Naive thymus-derived CD4-positive, alpha-beta T cell (primary cell): ENCODE measurements at regions of chr2 and their contacts with region 1.

Region 1: GRCh38 chr2:135876066-135876711 is at the start of gene MCM6:
- DNase-seq: peak; percentile 91 to 99 (median 97)
- ATAC-seq: peak; percentile 96
- H3K4me3 ChIP-seq: peak within 1 kb of the TSS; percentile 83
- H3K4me3 Mint-ChIP-seq: peak within 1 kb of the TSS; percentile 85 to 97 (median 93)
- H3K27ac ChIP-seq: peak within 1 kb of the TSS; percentile 84
- H3K27ac Mint-ChIP-seq: peak within 1 kb of the TSS; percentile 84 to 97 (median 95)
- H3K4me1 ChIP-seq: peaks cover 12 to 18% of the 10 kb centered on the region in 2 donors
- H3K4me1 Mint-ChIP-seq: peaks cover 23 to 44% (median 41%) of the 10 kb centered on the region in 7 donors
- H3K27me3 ChIP-seq: no peaks in the 10 kb centered on the region
- H3K27me3 Mint-ChIP-seq: peaks cover 0 to 5% (median 0%) of the 10 kb centered on the region in 5 donors
- total RNA-seq, gene MCM6: 12.1 to 105 (median 21.6) TPM

Region 2: GRCh38 chr2:135149251-135149650 is 726.9 kb before region 1 on chr2:
- CTCF ChIA-PET with region 1: no interaction called
- POLR2A ChIA-PET with region 1: no interaction called
- intact Hi-C with region 1: loop called in 1 of 2 experiments (anchors 10 kb)
- DNase-seq: no peak
- ATAC-seq: no peak
- H3K4me3 ChIP-seq: no peak overlapping the region
- H3K4me3 Mint-ChIP-seq: no peak overlapping the region
- H3K27ac ChIP-seq: no peak overlapping the region
- H3K27ac Mint-ChIP-seq: peak overlapping the region in 1 of 9 donors; percentile 55
- H3K4me1 ChIP-seq: no peaks in the 10 kb centered on the region
- H3K4me1 Mint-ChIP-seq: peaks cover 5 to 26% (median 21%) of the 10 kb centered on the region in 7 donors
- H3K27me3 ChIP-seq: no peaks in the 10 kb centered on the region
- H3K27me3 Mint-ChIP-seq: no peaks in the 10 kb centered on the region

Region 3: DNA sequence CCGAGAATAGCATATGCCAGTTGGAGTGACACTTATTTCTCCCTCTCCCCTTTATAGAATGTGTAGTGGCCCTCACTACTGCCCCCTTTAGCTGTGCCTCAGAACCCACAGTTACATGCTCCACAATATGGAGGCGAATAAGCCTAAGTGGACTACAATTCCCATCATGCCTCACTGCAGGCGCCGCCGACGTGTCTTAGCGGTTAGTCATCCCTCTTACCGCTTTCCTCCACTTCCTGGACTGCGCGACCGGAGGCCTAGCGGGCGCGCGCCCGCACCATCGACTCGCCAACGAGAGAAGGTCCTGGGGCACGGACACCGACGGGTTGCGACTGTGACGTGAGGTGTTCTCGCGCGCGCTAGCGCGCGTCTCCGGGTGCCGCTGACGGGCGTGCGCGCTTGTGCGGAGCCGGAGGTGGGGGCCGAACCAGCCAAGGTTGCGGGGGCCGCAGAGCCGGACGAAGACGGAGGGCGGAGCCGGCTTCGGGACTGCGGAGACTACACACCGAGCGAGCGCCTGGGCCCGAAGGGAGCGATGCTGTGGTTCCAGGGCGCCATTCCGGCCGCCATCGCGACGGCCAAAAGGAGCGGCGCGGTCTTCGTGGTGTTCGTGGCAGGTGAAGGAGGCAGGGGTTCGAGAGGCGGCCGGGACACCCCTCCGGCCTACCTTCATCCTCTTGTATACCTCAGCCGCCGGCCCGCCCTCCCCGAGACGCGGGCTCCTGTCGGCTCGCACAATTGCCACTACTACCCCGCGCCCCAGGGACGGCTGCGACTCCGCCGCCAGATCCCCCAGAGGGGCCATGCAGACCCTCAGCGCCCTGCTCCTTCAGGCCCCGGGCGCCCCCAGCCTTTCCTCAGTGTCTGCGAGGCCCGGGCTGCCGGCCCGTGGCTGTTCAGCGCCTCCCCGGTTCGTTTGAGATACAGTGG is 134.5 kb before region 1 on chr2 and contains the start of gene UBXN4:
- CTCF ChIA-PET with region 1: no interaction called
- POLR2A ChIA-PET with region 1: interaction called, 5 read pairs
- intact Hi-C with region 1: loop called (anchors 1 kb)
- DNase-seq: peak; percentile 73 to 93 (median 88)
- ATAC-seq: peak; percentile 95
- H3K4me3 ChIP-seq: peak within 1 kb of the TSS; percentile 88
- H3K4me3 Mint-ChIP-seq: peak within 1 kb of the TSS; percentile 92 to 98 (median 95)
- H3K27ac ChIP-seq: peak within 1 kb of the TSS; percentile 97
- H3K27ac Mint-ChIP-seq: peak within 1 kb of the TSS; percentile 89 to 99 (median 95)
- H3K4me1 ChIP-seq: peaks cover 20 to 22% of the 10 kb centered on the region in 2 donors
- H3K4me1 Mint-ChIP-seq: peaks cover 24 to 47% (median 43%) of the 10 kb centered on the region in 7 donors
- H3K27me3 ChIP-seq: no peaks in the 10 kb centered on the region
- H3K27me3 Mint-ChIP-seq: no peaks in the 10 kb centered on the region
- total RNA-seq, gene UBXN4: 115 to 158 (median 145) TPM

Region 4: DNA sequence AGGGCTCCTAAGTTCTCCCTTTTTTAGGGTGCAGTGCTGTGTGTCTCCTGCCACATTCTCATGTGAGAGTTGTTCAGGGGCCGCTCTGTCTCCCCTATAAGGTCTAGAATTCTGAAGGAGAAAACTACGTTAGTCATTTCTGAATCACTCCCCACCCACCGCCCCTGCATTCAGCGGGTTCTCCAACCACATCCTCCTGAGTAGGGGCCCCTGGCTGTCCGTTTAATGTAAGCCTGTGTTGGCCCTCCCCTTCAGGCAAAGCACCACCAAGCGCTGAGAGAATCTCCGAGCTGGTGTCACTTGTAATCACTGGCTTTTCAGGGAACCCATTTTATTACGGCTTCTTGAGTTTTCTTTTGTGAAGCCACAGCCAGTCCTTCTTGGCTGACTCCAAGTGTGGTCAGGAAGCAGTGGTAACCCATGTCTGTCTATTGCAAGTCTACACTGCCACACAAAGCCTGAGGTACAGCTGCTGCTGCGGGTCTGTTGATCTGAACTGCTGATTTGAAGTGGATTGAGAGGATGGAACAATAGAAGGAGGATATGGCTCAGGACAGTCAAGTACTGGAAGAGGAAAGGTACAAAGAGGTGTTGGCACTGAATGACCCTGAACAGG is 56.1 kb before region 1 on chr2:
- CTCF ChIA-PET with region 1: no interaction called
- POLR2A ChIA-PET with region 1: no interaction called
- intact Hi-C with region 1: loop called in 1 of 2 experiments (anchors 1 kb)
- DNase-seq: peak in 8 of 9 donors; percentile 17 to 84 (median 42)
- ATAC-seq: peak; percentile 79
- H3K4me3 ChIP-seq: peak overlapping the region; percentile 13
- H3K4me3 Mint-ChIP-seq: peak overlapping the region; percentile 20 to 79 (median 58)
- H3K27ac ChIP-seq: no peak overlapping the region
- H3K27ac Mint-ChIP-seq: peak overlapping the region in 7 of 9 donors; percentile 9 to 81 (median 47)
- H3K4me1 ChIP-seq: peaks cover 10 to 11% of the 10 kb centered on the region in 2 donors
- H3K4me1 Mint-ChIP-seq: peaks cover 7 to 43% (median 24%) of the 10 kb centered on the region in 7 donors
- H3K27me3 ChIP-seq: no peaks in the 10 kb centered on the region
- H3K27me3 Mint-ChIP-seq: no peaks in the 10 kb centered on the region

Region 5: GRCh38 chr2:135843671-135844070 is 32.5 kb before region 1 on chr2:
- CTCF ChIA-PET with region 1: no interaction called
- POLR2A ChIA-PET with region 1: no interaction called
- intact Hi-C with region 1: no loop called
- DNase-seq: no peak
- ATAC-seq: no peak
- H3K4me3 ChIP-seq: no peak overlapping the region
- H3K4me3 Mint-ChIP-seq: no peak overlapping the region
- H3K27ac ChIP-seq: no peak overlapping the region
- H3K27ac Mint-ChIP-seq: no peak overlapping the region
- H3K4me1 ChIP-seq: no peaks in the 10 kb centered on the region
- H3K4me1 Mint-ChIP-seq: peaks cover 2 to 32% (median 10%) of the 10 kb centered on the region in 7 donors
- H3K27me3 ChIP-seq: no peaks in the 10 kb centered on the region
- H3K27me3 Mint-ChIP-seq: no peaks in the 10 kb centered on the region

Region 6: GRCh38 chr2:135960656-135961551 is 84.7 kb after region 1 on chr2:
- CTCF ChIA-PET with region 1: no interaction called
- POLR2A ChIA-PET with region 1: no interaction called
- intact Hi-C with region 1: loop called in 1 of 2 experiments (anchors 5 kb)
- DNase-seq: peak in 6 of 9 donors; percentile 3 to 44 (median 26)
- ATAC-seq: peak; percentile 76
- H3K4me3 ChIP-seq: no peak overlapping the region
- H3K4me3 Mint-ChIP-seq: peak overlapping the region in 9 of 10 donors; percentile 3 to 79 (median 37)
- H3K27ac ChIP-seq: peak overlapping the region; percentile 40
- H3K27ac Mint-ChIP-seq: peak overlapping the region; percentile 51 to 93 (median 83)
- H3K4me1 ChIP-seq: peaks cover 18 to 26% of the 10 kb centered on the region in 2 donors
- H3K4me1 Mint-ChIP-seq: peaks cover 37 to 67% (median 60%) of the 10 kb centered on the region in 7 donors
- H3K27me3 ChIP-seq: no peaks in the 10 kb centered on the region
- H3K27me3 Mint-ChIP-seq: no peaks in the 10 kb centered on the region